Left ventricle myocardium inferior (tissue), 1 donor: ENCODE measurements at regions of chr17 and their contacts with region 1.

Region 1: DNA sequence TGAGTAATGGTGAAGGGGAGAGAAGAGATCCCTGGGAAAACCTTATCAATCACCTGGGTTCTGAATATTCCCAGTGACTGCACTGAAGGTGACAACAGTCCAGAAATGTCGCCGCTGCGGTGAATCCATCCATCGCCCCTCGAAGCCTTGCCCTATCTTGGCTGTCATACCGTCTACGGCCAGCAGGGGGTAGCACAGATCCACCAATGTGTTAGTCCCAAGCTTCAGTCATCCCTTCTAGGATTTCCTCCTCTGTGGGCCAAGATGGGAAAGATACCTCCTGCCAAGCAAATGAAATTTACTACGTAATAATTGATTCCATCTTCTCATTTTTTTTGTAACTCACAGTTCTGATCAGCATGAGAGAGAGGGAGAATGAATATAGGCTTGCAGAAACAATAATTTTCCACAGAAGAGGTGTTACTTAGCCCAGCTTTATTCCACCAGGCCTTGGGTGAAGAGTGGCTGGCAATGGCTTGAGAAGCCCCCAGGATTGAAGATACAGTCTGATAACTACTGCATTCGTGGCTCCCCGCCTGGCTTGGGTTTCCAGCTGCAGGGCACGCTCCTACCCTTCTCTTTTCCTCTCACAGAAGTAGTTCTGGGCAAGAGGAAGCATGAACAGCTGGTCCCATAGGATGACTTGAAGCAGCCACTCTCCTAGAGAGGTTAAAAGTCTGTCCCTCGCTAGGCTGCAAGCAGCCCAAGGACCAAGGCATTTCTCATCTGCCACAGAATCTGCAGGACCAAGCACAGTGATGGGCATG is 2.6 kb upstream of the FMNL1 start:
- DNase-seq: peak; percentile 88
- H3K4me3 ChIP-seq: no peak overlapping the region
- H3K27ac ChIP-seq: peak overlapping the region; percentile 27
- H3K4me1 ChIP-seq: peaks cover 41% of the 10 kb centered on the region
- H3K27me3 ChIP-seq: no peaks in the 10 kb centered on the region
- CTCF ChIP-seq: peak; percentile 93

Region 2: GRCh38 chr17:45270828-45271418 is 51.8 kb after region 1 on chr17:
- intact Hi-C with region 1: no loop called
- DNase-seq: no peak
- H3K4me3 ChIP-seq: no peak overlapping the region
- H3K27ac ChIP-seq: no peak overlapping the region
- H3K4me1 ChIP-seq: peaks cover 15% of the 10 kb centered on the region
- H3K27me3 ChIP-seq: no peaks in the 10 kb centered on the region
- CTCF ChIP-seq: peak; percentile 58

Region 3: GRCh38 chr17:45385331-45385997 is 166.4 kb after region 1 on chr17:
- intact Hi-C with region 1: loop called (anchors 5 kb)
- DNase-seq: peak; percentile 88
- H3K4me3 ChIP-seq: no peak overlapping the region
- H3K27ac ChIP-seq: peak overlapping the region; percentile 58
- H3K4me1 ChIP-seq: peaks cover 38% of the 10 kb centered on the region
- H3K27me3 ChIP-seq: peaks cover 7% of the 10 kb centered on the region
- CTCF ChIP-seq: peak; percentile 99